ENCODE measurements at regions of chr1 and their contacts with region 1.

Region 1: GRCh38 chr1:207321079-207321789 is at the start of gene CD55:
- DNase-seq: peak; percentile 99
- ATAC-seq: peak; percentile 92
- H3K4me3 ChIP-seq: peak within 1 kb of the TSS; percentile 74 to 88
- H3K27ac ChIP-seq: peak within 1 kb of the TSS; percentile 83
- H3K4me1 ChIP-seq: peaks cover 13 to 23% of the 10 kb centered on the region in 2 experiments; a peak in 3 of 4 replicates
- H3K27me3 ChIP-seq: no peaks in the 10 kb centered on the region
- CTCF ChIP-seq: peak in 1 of 3 experiments; percentile 24; a peak in 1 of 6 replicates
- POLR2A ChIP-seq: peak; percentile 86
- RAD21 ChIP-seq: peak; percentile 39; the same call in 1 of the 2 replicates
- total RNA-seq, gene CD55: 75.4 TPM

Region 2: DNA sequence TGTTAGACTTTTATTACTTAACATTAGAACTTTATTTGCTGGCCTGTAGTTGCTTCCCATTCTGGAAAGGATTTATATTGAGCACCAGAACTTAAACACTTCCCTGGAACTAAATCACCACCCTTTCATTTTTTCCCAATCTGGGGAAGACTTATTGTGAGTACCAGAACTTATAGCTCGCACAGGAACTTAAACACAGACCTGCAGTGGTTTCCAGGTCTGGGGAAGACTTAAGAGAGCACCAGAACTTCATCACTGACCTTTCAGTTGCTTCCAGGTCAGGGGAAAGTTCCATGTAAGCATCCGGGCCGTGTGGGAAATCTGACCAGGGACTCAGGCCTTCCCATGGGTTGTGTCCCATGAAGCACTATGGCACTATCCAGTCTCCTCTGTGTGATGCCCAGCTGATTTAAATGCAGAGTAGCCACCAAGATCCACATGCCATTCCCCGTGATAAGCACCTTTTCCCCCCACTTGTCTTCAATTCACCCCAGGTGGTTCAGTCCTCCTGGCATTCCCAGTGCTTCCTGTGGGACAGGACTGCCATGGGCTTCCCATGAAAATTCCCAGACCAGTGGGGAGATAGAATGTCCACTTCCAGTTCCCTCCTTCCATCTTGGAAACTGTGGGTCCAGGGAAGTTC is 168.3 kb before region 1 on chr1:
- CTCF ChIA-PET with region 1: no interaction called
- POLR2A ChIA-PET with region 1: interaction called, 4 read pairs
- RAD21 ChIA-PET with region 1: no interaction called
- intact Hi-C with region 1: loop called (anchors 1 kb)
- DNase-seq: peak; percentile 99
- ATAC-seq: peak; percentile 94
- H3K4me3 ChIP-seq: peak overlapping the region; percentile 61 to 93
- H3K27ac ChIP-seq: peak overlapping the region; percentile 92
- H3K4me1 ChIP-seq: peaks cover 2% of the 10 kb centered on the region in 2 experiments; a peak in 1 of 4 replicates
- H3K27me3 ChIP-seq: no peaks in the 10 kb centered on the region
- CTCF ChIP-seq: no peak
- POLR2A ChIP-seq: peak; percentile 72
- RAD21 ChIP-seq: 0 out of 2 replicates have a peak, but pooled peaks have one; percentile 26

Region 3: GRCh38 chr1:207205614-207206061 is 115.6 kb before region 1 on chr1:
- CTCF ChIA-PET with region 1: no interaction called
- POLR2A ChIA-PET with region 1: no interaction called
- RAD21 ChIA-PET with region 1: no interaction called
- intact Hi-C with region 1: loop called (anchors 10 kb)
- DNase-seq: no peak
- ATAC-seq: no peak
- H3K4me3 ChIP-seq: no peak overlapping the region
- H3K27ac ChIP-seq: peak overlapping the region; percentile 28; the same call in 1 of the 2 replicates
- H3K4me1 ChIP-seq: peaks cover 10 to 22% of the 10 kb centered on the region in 2 experiments; a peak in 3 of 4 replicates
- H3K27me3 ChIP-seq: no peaks in the 10 kb centered on the region
- CTCF ChIP-seq: no peak
- POLR2A ChIP-seq: no peak
- RAD21 ChIP-seq: no peak

Region 4: GRCh38 chr1:207335695-207336363 is 14.6 kb after region 1 on chr1:
- CTCF ChIA-PET with region 1: no interaction called
- POLR2A ChIA-PET with region 1: interaction called, 12 read pairs
- RAD21 ChIA-PET with region 1: no interaction called
- intact Hi-C with region 1: no loop called
- DNase-seq: no peak
- ATAC-seq: no peak
- H3K4me3 ChIP-seq: no peak overlapping the region
- H3K27ac ChIP-seq: no peak overlapping the region
- H3K4me1 ChIP-seq: no peaks in the 10 kb centered on the region
- H3K27me3 ChIP-seq: no peaks in the 10 kb centered on the region
- CTCF ChIP-seq: no peak
- POLR2A ChIP-seq: no peak
- RAD21 ChIP-seq: no peak

Measured in HCT116 (cell line).